Heart right ventricle (tissue), 16 donors: ENCODE measurements at regions of chr5 and their contacts with region 1.

Region 1: GRCh38 chr5:157245477-157245876 is 20.4 kb upstream of the CYFIP2 start:
- DNase-seq: no peak
- ATAC-seq: no peak
- H3K4me3 ChIP-seq: no peak overlapping the region
- H3K27ac ChIP-seq: no peak overlapping the region
- H3K4me1 ChIP-seq: peaks cover 0 to 30% (median 0%) of the 10 kb centered on the region in 9 donors
- H3K27me3 ChIP-seq: no peaks in the 10 kb centered on the region
- CTCF ChIP-seq: no peak

Region 2: DNA sequence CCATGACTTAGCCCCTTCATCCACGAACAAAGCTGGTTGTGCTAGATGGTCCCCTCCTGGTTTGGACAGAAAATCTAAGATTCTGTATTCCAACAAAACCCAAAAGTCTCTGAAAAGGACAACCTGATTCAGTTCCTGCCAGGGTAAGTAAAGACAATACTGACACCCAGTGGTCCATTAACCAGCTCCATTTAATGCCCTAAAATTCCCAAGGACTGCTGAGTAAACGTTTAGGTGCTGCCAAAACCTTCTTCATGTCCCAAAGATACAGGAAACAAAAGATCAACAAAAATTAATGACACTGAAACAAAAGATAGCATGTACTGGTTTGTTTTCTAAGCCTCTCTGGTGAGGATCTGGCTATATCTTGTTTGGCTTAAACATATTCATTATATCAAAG is 420.7 kb before region 1 on chr5:
- intact Hi-C with region 1: no loop called
- DNase-seq: peak in 1 of 2 donors; percentile 27
- ATAC-seq: peak in 7 of 8 donors; percentile 57 to 85 (median 70)
- H3K4me3 ChIP-seq: no peak overlapping the region
- H3K27ac ChIP-seq: no peak overlapping the region
- H3K4me1 ChIP-seq: no peaks in the 10 kb centered on the region
- H3K27me3 ChIP-seq: no peaks in the 10 kb centered on the region
- CTCF ChIP-seq: peak in 8 of 9 donors; percentile 5 to 66 (median 56)

Region 3: DNA sequence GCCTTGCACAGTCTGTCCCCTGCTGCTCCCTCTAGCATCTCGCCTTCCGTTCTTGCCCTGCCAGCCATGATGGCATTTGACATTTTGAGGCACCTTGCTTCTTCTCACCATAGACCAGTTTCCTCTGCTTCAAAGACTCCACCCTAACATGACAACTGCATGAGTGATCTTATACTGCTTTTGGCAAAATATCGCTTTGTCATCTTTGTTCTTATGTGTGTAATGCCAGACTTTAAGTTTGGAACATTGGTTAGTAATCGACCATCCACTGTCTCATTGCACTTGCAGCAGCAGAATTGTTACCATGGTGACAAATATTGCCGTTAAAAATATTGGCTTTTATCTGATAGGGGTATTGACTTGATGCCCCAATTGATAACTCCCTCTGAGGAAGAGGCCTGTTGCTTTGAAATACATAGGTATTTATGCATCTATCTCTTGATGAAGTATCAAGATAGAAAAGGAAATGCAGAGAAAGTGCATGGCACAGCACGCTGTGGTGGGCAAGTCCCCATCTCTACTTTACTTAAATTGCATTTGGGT is 86.2 kb before region 1 on chr5:
- intact Hi-C with region 1: loop called in 3 of 10 experiments (anchors 10 kb)
- DNase-seq: no peak
- ATAC-seq: no peak
- H3K4me3 ChIP-seq: no peak overlapping the region
- H3K27ac ChIP-seq: no peak overlapping the region
- H3K4me1 ChIP-seq: no peaks in the 10 kb centered on the region
- H3K27me3 ChIP-seq: peaks cover 0 to 20% (median 7%) of the 10 kb centered on the region in 7 donors
- CTCF ChIP-seq: no peak

Region 4: GRCh38 chr5:157167214-157167621 is 78.3 kb before region 1 on chr5:
- intact Hi-C with region 1: loop called in 1 of 10 experiments (anchors 10 kb)
- DNase-seq: no peak
- ATAC-seq: no peak
- H3K4me3 ChIP-seq: no peak overlapping the region
- H3K27ac ChIP-seq: no peak overlapping the region
- H3K4me1 ChIP-seq: no peaks in the 10 kb centered on the region
- H3K27me3 ChIP-seq: peaks cover 0 to 23% (median 12%) of the 10 kb centered on the region in 7 donors
- CTCF ChIP-seq: no peak

Region 5: DNA sequence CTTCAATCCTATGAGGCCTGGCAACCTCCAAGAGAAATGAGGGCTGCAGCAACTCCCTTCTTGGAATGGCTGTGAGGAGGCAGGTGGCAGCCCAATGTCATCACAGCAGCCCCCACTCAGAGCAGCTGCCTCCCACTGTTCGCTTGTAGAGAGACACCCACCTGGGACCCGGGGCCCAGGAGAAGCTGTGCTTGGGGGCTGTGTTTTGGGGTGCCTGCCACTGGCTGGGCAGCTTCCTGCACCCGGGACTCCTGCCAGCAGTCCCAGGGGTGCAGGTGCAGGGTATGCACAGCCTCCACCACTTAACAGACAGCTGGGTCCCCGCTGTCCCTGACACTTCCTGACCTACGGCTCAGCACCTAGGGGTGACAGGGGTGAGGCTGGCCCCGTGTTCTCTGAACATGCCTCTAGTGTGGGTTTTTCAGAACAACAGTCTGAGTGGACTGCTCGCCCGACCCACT is 240.8 kb after region 1 on chr5:
- intact Hi-C with region 1: loop called in 1 of 10 experiments (anchors 5 kb)
- DNase-seq: no peak
- ATAC-seq: peak in 1 of 8 donors; percentile 51
- H3K4me3 ChIP-seq: no peak overlapping the region
- H3K27ac ChIP-seq: no peak overlapping the region
- H3K4me1 ChIP-seq: peaks cover 0 to 12% (median 8%) of the 10 kb centered on the region in 9 donors
- H3K27me3 ChIP-seq: no peaks in the 10 kb centered on the region
- CTCF ChIP-seq: no peak